Endothelial cell of umbilical vein (primary cell): ENCODE measurements at regions of chr11 and their contacts with region 1.

Region 1: DNA sequence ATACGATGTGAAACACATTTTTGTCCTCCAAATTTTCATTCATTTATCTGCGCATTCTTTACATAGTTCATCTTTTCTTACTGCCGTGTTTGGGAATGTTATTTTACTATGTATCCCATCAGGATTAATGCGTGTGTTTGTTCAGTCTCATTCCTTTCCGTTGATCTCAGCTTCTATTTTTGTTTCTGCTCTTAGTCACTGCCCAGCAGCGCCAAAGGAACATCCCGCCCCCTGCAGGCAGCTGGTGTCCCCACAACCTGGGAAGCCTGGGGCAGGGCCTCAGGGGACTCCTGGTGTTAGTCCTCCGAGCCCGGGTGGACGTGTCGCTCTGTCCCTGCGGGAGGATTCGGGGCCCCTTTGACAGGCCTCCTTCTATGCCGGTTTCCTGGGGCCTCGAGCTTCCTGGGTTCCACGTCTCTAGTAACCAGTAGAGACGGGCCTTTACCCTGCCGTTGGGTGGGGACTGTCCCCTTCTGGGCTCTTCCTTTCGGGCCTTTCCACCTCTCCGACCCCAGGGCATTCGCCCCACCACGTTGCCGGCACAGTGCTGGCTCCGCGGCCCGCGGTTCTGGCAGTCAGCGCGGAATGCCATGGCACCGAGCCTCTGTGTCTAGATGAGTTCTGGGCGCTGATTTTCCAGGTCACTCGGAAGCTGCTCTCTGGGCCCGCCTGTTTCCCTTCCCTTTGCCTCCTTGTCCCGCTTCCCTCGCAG is 39.8 kb downstream of the WEE1 start:
- DNase-seq: peak; percentile 99
- H3K4me3 ChIP-seq: peak overlapping the region in 2 of 3 experiments; percentile 16 to 43
- H3K27ac ChIP-seq: peak overlapping the region; percentile 100
- H3K4me1 ChIP-seq: peaks cover 36% of the 10 kb centered on the region
- H3K27me3 ChIP-seq: no peaks in the 10 kb centered on the region
- CTCF ChIP-seq: peak; percentile 95 to 96
- POLR2A ChIP-seq: no peak

Region 2: GRCh38 chr11:9015677-9016076 is 597.6 kb before region 1 on chr11:
- CTCF ChIA-PET with region 1: no interaction called
- POLR2A ChIA-PET with region 1: no interaction called
- dilution Hi-C with region 1: no loop called
- intact Hi-C with region 1: loop called (anchors 5 kb)
- DNase-seq: peak; percentile 81
- H3K4me3 ChIP-seq: no peak overlapping the region
- H3K27ac ChIP-seq: no peak overlapping the region
- H3K4me1 ChIP-seq: peaks cover 13% of the 10 kb centered on the region
- H3K27me3 ChIP-seq: peaks cover 0 to 6% of the 10 kb centered on the region in 2 experiments
- CTCF ChIP-seq: peak; percentile 80 to 85
- POLR2A ChIP-seq: no peak

Region 3: DNA sequence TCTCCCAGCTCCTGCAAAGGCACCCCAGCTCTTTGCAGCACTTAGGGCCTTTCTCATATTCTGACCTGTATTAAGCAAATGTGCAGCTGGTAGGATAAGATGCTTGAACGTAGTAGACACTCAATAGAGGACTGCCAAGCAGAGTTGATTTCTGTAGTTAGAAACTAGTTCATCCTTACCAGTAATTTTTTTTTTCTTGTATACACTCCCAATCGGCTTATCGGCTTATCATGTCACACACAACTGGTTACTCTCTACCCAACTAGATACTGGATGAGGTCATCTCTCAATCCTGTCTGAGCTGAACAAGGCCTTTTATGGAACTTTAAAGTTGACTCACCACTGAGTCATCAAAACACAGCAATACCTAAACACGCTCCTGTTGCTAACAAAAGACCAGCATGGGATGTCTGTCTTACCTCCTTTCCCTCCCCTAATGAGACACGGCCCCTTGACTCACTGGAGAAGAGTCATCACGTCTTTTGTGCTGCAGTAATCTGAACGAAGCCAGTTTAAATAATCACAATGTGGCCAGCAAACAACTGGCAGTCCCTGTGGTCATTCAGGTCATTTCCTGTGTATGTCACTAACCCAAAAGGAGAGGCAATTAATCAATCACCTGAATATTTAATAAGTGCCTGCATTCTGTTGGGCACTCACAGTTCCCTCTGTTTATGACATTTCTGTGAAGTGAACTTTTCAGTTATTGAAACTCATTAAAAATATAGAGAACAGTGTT is 47.3 kb before region 1 on chr11:
- CTCF ChIA-PET with region 1: no interaction called
- POLR2A ChIA-PET with region 1: no interaction called
- dilution Hi-C with region 1: no loop called
- intact Hi-C with region 1: loop called (anchors 1 kb)
- DNase-seq: peak; percentile 99
- H3K4me3 ChIP-seq: no peak overlapping the region
- H3K27ac ChIP-seq: peak overlapping the region; percentile 96
- H3K4me1 ChIP-seq: peaks cover 31% of the 10 kb centered on the region
- H3K27me3 ChIP-seq: no peaks in the 10 kb centered on the region
- CTCF ChIP-seq: no peak
- POLR2A ChIP-seq: no peak

Region 4: DNA sequence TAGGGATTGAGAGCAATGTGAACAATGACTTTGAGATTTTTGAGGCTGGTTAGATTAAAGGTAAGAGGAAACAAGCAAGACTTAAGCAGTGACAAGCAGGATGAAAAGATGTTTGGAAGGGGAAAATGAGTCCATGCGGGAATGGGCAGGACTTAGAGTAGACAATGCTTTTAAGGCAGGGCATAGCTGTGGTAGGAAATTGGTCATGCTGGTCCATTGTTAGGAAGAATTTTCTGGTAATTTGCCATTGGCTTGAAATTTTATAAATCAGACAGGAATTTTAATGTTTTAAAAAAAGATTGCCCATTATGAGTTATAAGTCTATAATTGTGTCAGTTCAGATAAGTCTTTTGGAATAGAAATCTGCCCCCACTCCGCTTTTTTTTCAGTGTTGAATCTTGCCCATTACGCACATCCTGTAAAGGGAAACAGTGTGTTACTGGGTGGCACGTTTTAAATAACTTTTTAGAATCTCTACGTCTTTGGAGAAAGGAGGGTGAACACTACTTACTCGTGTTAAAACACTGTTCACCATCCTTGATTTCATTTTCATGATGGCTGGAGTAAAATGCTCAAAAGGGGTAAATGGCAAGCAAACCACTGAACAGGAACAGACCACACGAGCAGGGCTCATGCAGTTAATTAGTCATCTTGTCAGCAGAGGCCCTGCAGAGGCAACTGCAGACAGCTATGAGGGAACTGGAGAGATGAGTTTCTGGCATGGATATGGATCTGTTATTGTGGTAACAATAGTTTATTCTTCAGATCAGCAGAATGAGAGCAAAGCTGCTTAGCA is 75.6 kb after region 1 on chr11:
- CTCF ChIA-PET with region 1: interaction called, 13 read pairs
- POLR2A ChIA-PET with region 1: interaction called, 3 read pairs
- dilution Hi-C with region 1: no loop called
- intact Hi-C with region 1: loop called (anchors 1 kb)
- DNase-seq: peak; percentile 96
- H3K4me3 ChIP-seq: peak overlapping the region in 2 of 3 experiments; percentile 10 to 31
- H3K27ac ChIP-seq: peak overlapping the region; percentile 98
- H3K4me1 ChIP-seq: peaks cover 66% of the 10 kb centered on the region
- H3K27me3 ChIP-seq: no peaks in the 10 kb centered on the region
- CTCF ChIP-seq: no peak
- POLR2A ChIP-seq: peak; percentile 72

Region 5: DNA sequence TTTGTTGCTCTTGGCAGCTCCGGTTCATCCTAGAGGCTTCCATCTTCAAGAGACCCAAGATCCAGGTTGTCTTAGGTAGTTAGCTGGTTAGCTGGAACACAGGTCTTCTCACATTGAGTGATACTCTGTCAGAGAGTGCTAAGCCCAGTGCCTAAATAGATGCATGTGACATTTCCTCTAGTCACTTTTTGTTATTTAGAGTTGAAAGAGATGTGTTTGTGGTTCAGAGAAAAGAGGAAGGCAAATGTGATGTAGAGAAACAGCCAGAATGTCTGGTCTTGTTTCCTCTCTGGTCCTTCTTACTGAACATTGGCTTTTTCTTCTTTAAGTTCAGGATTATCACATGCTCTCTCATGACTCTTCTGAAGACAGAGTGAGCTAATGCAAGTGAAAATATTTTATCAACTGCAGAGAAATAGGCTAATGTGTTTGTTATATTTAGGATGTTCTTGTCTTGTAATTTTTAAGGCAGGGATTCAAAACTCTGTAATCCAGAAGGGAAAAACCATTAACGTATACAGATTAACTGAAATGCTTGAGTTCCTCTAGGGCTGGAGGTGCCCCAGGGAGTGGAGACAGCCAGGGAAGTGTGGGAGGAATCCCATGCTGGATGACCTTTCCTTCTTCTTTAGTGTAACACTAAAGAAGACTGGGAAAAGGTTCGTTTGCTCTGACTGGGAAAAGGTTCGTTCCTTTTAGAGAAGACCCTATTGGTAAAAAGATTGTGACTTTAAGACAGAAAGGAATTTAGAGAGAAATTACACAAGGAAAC is 126.0 kb after region 1 on chr11:
- CTCF ChIA-PET with region 1: interaction called, 11 read pairs
- POLR2A ChIA-PET with region 1: no interaction called
- dilution Hi-C with region 1: loop called (anchors 25 kb)
- intact Hi-C with region 1: no loop called
- DNase-seq: no peak
- H3K4me3 ChIP-seq: no peak overlapping the region
- H3K27ac ChIP-seq: no peak overlapping the region
- H3K4me1 ChIP-seq: no peaks in the 10 kb centered on the region
- H3K27me3 ChIP-seq: no peaks in the 10 kb centered on the region
- CTCF ChIP-seq: no peak
- POLR2A ChIP-seq: no peak

Region 6: DNA sequence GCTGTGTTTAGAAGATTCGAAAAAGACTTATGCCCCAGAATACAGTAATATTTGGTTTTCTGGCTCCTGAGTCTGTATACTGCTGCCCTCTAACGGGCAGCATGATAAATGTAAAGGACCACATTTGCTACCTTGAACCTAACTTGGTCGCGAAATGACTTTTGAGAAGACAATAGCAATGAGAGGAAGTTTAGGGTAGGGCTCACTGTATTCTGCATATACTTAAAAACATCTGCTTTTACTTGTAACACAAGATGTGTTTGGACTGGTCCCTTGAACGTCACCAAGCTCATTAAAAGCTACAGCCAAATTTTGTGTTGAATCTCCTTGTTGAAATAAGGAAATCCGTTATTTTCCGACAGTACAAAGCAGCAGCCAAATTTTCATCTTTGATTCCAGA is 359.7 kb after region 1 on chr11:
- CTCF ChIA-PET with region 1: interaction called, 3 read pairs
- POLR2A ChIA-PET with region 1: no interaction called
- dilution Hi-C with region 1: no loop called
- intact Hi-C with region 1: loop called (anchors 5 kb)
- DNase-seq: peak; percentile 74
- H3K4me3 ChIP-seq: no peak overlapping the region
- H3K27ac ChIP-seq: no peak overlapping the region
- H3K4me1 ChIP-seq: peaks cover 14% of the 10 kb centered on the region
- H3K27me3 ChIP-seq: no peaks in the 10 kb centered on the region
- CTCF ChIP-seq: peak; percentile 58 to 61
- POLR2A ChIP-seq: no peak